MCF 10A (cell line): ENCODE measurements at regions of chr15 and their contacts with region 1.

Region 1: GRCh38 chr15:68820295-68821189 is at the start of gene ANP32A:
- DNase-seq: peak; percentile 94
- H3K4me3 Mint-ChIP-seq: peak within 1 kb of the TSS; percentile 96
- H3K27ac Mint-ChIP-seq: peak within 1 kb of the TSS; percentile 96
- H3K4me1 Mint-ChIP-seq: peaks cover 26% of the 10 kb centered on the region
- H3K27me3 Mint-ChIP-seq: no peaks in the 10 kb centered on the region
- CTCF ChIP-seq: no peak
- total RNA-seq, gene ANP32A: 150 and 159 TPM in 2 replicates

Region 2: GRCh38 chr15:68620721-68621527 is 199.6 kb before region 1 on chr15:
- CTCF ChIA-PET with region 1: no interaction called
- POLR2A ChIA-PET with region 1: no interaction called
- intact Hi-C with region 1: no loop called
- DNase-seq: peak; percentile 19
- H3K4me3 Mint-ChIP-seq: no peak overlapping the region
- H3K27ac Mint-ChIP-seq: no peak overlapping the region
- H3K4me1 Mint-ChIP-seq: no peaks in the 10 kb centered on the region
- H3K27me3 Mint-ChIP-seq: no peaks in the 10 kb centered on the region
- CTCF ChIP-seq: no peak

Region 3: GRCh38 chr15:68783226-68784058 is 37.1 kb before region 1 on chr15:
- CTCF ChIA-PET with region 1: interaction called, 8 read pairs
- POLR2A ChIA-PET with region 1: interaction called, 7 read pairs
- intact Hi-C with region 1: loop called (anchors 5 kb)
- DNase-seq: peak; percentile 46
- H3K4me3 Mint-ChIP-seq: no peak overlapping the region
- H3K27ac Mint-ChIP-seq: no peak overlapping the region
- H3K4me1 Mint-ChIP-seq: no peaks in the 10 kb centered on the region
- H3K27me3 Mint-ChIP-seq: no peaks in the 10 kb centered on the region
- CTCF ChIP-seq: peak; percentile 51